ENCODE measurements at regions of chr3 and their contacts with region 1.

Region 1: GRCh38 chr3:100463002-100463401 is 29.4 kb upstream of the TMEM45A start:
- DNase-seq: peak; percentile 17
- ATAC-seq: peak; percentile 87
- H3K4me3 Mint-ChIP-seq: no peak overlapping the region
- H3K27ac Mint-ChIP-seq: no peak overlapping the region
- H3K4me1 Mint-ChIP-seq: peaks cover 6% of the 10 kb centered on the region
- H3K27me3 Mint-ChIP-seq: no peaks in the 10 kb centered on the region
- CTCF ChIP-seq: peak; percentile 77

Region 2: GRCh38 chr3:100449214-100449613 is 13.8 kb before region 1 on chr3:
- CTCF ChIA-PET with region 1: interaction called, 13 read pairs
- POLR2A ChIA-PET with region 1: interaction called, 5 read pairs
- intact Hi-C with region 1: no loop called
- DNase-seq: no peak
- ATAC-seq: no peak
- H3K4me3 Mint-ChIP-seq: no peak overlapping the region
- H3K27ac Mint-ChIP-seq: no peak overlapping the region
- H3K4me1 Mint-ChIP-seq: no peaks in the 10 kb centered on the region
- H3K27me3 Mint-ChIP-seq: no peaks in the 10 kb centered on the region
- CTCF ChIP-seq: no peak

Region 3: GRCh38 chr3:100480111-100480510 is 17.1 kb after region 1 on chr3:
- CTCF ChIA-PET with region 1: interaction called, 11 read pairs
- POLR2A ChIA-PET with region 1: interaction called, 3 read pairs
- intact Hi-C with region 1: no loop called
- DNase-seq: no peak
- ATAC-seq: no peak
- H3K4me3 Mint-ChIP-seq: no peak overlapping the region
- H3K27ac Mint-ChIP-seq: no peak overlapping the region
- H3K4me1 Mint-ChIP-seq: no peaks in the 10 kb centered on the region
- H3K27me3 Mint-ChIP-seq: peaks cover 17% of the 10 kb centered on the region
- CTCF ChIP-seq: no peak

Region 4: DNA sequence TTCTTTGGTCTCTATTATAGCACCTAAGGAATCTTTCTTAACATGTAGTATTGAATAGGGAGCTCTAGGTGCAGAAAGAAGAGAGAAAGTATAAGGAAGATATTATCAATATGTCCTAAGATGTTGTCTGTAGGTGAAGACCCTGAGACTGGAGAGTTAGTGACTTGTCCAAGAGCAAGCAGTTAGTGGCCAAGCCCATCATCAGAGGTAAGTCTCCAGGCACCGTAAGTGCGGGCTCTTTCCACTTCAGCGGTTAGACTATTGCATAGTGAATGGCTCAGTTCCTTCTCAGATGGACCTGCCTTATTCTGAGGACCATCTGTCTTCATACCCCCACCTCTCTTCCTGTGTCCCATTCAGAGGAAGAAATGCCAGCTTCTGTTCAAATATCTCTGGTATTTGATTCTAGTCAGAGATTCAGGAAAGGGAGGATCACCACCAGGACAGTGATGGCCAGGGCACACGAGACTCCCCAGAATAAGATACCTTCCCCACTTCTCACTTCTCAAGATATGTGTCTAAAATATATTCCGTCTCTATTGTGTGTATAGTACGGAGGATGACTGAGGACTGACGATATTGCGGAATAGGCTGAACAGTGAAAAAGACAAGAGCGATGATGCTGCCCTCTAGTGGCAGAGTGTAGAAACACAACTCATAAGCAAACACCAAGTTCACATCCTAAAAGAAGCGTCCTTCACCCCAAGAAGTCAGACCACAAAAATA is 127.3 kb after region 1 on chr3:
- CTCF ChIA-PET with region 1: interaction called, 84 read pairs
- POLR2A ChIA-PET with region 1: no interaction called
- intact Hi-C with region 1: loop called (anchors 1 kb)
- DNase-seq: peak; percentile 76
- ATAC-seq: peak; percentile 97
- H3K4me3 Mint-ChIP-seq: no peak overlapping the region
- H3K27ac Mint-ChIP-seq: no peak overlapping the region
- H3K4me1 Mint-ChIP-seq: peaks cover 3% of the 10 kb centered on the region
- H3K27me3 Mint-ChIP-seq: no peaks in the 10 kb centered on the region
- CTCF ChIP-seq: peak; percentile 83

Region 5: GRCh38 chr3:100634493-100635272 is 171.7 kb after region 1 on chr3:
- CTCF ChIA-PET with region 1: interaction called, 16 read pairs
- POLR2A ChIA-PET with region 1: no interaction called
- intact Hi-C with region 1: no loop called
- DNase-seq: peak; percentile 74
- ATAC-seq: peak; percentile 81
- H3K4me3 Mint-ChIP-seq: no peak overlapping the region
- H3K27ac Mint-ChIP-seq: peak overlapping the region; percentile 44
- H3K4me1 Mint-ChIP-seq: peaks cover 11% of the 10 kb centered on the region
- H3K27me3 Mint-ChIP-seq: peaks cover 1% of the 10 kb centered on the region
- CTCF ChIP-seq: no peak

Region 6: DNA sequence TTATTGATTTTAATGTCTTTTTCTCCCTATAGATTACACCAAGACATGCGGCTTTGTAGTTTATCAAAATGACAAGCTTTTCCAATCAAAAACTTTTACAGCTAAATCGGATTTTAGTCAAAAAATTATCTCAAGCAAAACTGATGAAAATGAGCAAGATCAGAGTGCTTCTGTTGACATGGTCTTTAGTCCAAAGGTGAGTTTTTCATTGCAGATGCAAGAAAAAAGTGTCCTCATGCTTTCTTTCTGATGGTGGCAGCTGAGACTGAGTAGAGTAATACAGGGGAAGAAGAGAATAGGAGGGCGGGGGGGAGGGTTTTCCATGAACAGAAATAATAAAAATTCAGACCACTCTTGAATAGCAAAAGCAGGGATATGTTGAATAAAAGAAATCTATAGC is 182.9 kb after region 1 on chr3:
- CTCF ChIA-PET with region 1: no interaction called
- POLR2A ChIA-PET with region 1: no interaction called
- intact Hi-C with region 1: no loop called
- DNase-seq: no peak
- ATAC-seq: no peak
- H3K4me3 Mint-ChIP-seq: no peak overlapping the region
- H3K27ac Mint-ChIP-seq: no peak overlapping the region
- H3K4me1 Mint-ChIP-seq: peaks cover 20% of the 10 kb centered on the region
- H3K27me3 Mint-ChIP-seq: no peaks in the 10 kb centered on the region
- CTCF ChIP-seq: no peak

Region 7: GRCh38 chr3:100796556-100796955 is 333.6 kb after region 1 on chr3:
- CTCF ChIA-PET with region 1: interaction called, 18 read pairs
- POLR2A ChIA-PET with region 1: no interaction called
- intact Hi-C with region 1: no loop called
- DNase-seq: no peak
- ATAC-seq: no peak
- H3K4me3 Mint-ChIP-seq: no peak overlapping the region
- H3K27ac Mint-ChIP-seq: no peak overlapping the region
- H3K4me1 Mint-ChIP-seq: peaks cover 4% of the 10 kb centered on the region
- H3K27me3 Mint-ChIP-seq: peaks cover 3% of the 10 kb centered on the region
- CTCF ChIP-seq: peak; percentile 35

Measured in activated CD8-positive, alpha-beta T cell treated with anti-CD3 and anti-CD28 coated beads for 36 hours (primary cell).